Tibial artery (tissue), 4 donors: ENCODE measurements at regions of chr4 and their contacts with region 1.

Region 1: DNA sequence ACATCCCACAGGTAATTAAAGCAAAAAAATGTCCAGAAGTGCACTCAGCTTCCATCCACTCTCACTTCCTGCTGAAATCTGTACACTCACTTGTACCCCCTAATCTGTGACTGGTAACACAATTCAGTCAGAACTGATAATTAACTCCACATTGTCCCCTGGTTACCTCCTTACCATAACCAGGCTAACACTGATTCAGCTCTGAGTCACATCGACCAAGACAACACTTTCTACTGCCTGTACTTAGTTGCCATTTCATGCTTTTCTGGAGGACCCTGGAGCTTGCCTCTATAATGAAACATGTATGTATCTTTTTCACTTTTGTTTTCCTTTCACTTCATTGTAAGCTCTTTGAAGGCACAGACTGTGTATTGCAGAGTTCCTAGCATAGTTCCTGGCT is 130.9 kb upstream of the GABRG1 start:
- DNase-seq: no peak
- H3K4me3 ChIP-seq: no peak overlapping the region
- H3K27ac ChIP-seq: no peak overlapping the region
- H3K4me1 ChIP-seq: no peaks in the 10 kb centered on the region
- H3K27me3 ChIP-seq: no peaks in the 10 kb centered on the region
- CTCF ChIP-seq: no peak

Region 2: DNA sequence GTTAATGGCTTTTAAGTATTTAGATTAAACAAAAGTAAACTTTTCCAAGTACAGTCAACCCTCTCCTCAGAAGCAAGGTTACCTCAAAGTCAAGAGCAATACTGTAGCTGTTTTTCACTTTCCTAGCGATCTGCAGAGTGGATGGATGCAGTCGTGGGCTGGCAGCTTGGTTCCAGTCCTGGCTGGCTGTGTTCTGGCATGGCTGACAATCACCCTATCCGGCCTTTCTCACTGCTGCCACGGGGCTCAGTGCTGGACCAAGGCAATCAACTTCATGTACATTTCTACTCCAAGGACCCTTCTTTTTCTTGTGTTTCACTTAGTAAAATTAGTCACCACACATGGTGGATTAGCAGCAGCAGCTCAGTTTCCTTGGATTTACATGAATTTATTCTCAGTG is 984.9 kb after region 1 on chr4:
- intact Hi-C with region 1: loop called (anchors 5 kb)
- DNase-seq: no peak
- H3K4me3 ChIP-seq: no peak overlapping the region
- H3K27ac ChIP-seq: no peak overlapping the region
- H3K4me1 ChIP-seq: peaks cover 0 to 12% (median 0%) of the 10 kb centered on the region in 4 donors
- H3K27me3 ChIP-seq: no peaks in the 10 kb centered on the region
- CTCF ChIP-seq: no peak